PC-9 (cell line): ENCODE measurements at regions of chr3 and their contacts with region 1.

Region 1: DNA sequence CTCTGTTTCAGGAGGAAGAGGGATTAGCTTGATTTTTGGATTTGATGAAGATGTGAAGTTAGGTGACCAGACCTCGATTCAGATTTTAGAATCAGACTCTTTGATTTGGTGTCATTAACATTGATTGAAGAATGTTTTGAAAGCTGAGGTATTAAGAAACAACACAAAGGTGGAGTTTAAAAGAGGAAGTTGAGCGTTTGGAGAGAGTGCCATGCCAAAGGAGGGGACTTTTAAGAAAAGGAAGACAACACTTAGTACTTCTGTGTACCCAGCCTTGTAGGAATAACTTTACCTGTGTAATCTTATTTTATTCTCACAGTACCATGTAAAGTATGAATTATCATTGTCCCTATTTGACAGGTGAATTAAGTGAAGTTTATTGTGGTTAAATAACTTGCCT is 34.4 kb downstream of the PPARG start:
- DNase-seq: no peak
- H3K4me3 ChIP-seq: no peak overlapping the region
- H3K27ac ChIP-seq: 0 out of 2 replicates have a peak overlapping the region, but pooled peaks have one; percentile 29
- H3K4me1 ChIP-seq: peaks cover 22% of the 10 kb centered on the region
- H3K27me3 ChIP-seq: no peaks in the 10 kb centered on the region
- CTCF ChIP-seq: no peak

Region 2: GRCh38 chr3:12339701-12340480 is 16.7 kb after region 1 on chr3:
- CTCF ChIA-PET with region 1: no interaction called
- POLR2A ChIA-PET with region 1: no interaction called
- intact Hi-C with region 1: loop called (anchors 2 kb)
- DNase-seq: no peak
- H3K4me3 ChIP-seq: no peak overlapping the region
- H3K27ac ChIP-seq: no peak overlapping the region
- H3K4me1 ChIP-seq: peaks cover 27% of the 10 kb centered on the region
- H3K27me3 ChIP-seq: no peaks in the 10 kb centered on the region
- CTCF ChIP-seq: no peak